ENCODE measurements at regions of chr7 and their contacts with region 1.

Region 1: GRCh38 chr7:102306875-102307677 is 20.4 kb downstream of the SH2B2 start:
- DNase-seq: peak; percentile 62
- ATAC-seq: peak; percentile 81
- H3K4me3 Mint-ChIP-seq: no peak overlapping the region
- H3K27ac Mint-ChIP-seq: peak overlapping the region; percentile 60; the same call in 1 of the 2 replicates
- H3K4me1 Mint-ChIP-seq: peaks cover 16% of the 10 kb centered on the region
- H3K27me3 Mint-ChIP-seq: no peaks in the 10 kb centered on the region; the same call in none of the 2 replicates
- CTCF ChIP-seq: no peak

Region 2: GRCh38 chr7:102321351-102322177 is 14.5 kb after region 1 on chr7:
- CTCF ChIA-PET with region 1: interaction called, 14 read pairs
- POLR2A ChIA-PET with region 1: no interaction called
- DNase-seq: peak; percentile 74
- ATAC-seq: peak; percentile 74
- H3K4me3 Mint-ChIP-seq: peak overlapping the region; percentile 38
- H3K27ac Mint-ChIP-seq: no peak overlapping the region
- H3K4me1 Mint-ChIP-seq: peaks cover 19% of the 10 kb centered on the region
- H3K27me3 Mint-ChIP-seq: peaks cover 13% of the 10 kb centered on the region
- CTCF ChIP-seq: no peak